Caco-2 (cell line): ENCODE measurements at regions of chr5 and their contacts with region 1.

Region 1: DNA sequence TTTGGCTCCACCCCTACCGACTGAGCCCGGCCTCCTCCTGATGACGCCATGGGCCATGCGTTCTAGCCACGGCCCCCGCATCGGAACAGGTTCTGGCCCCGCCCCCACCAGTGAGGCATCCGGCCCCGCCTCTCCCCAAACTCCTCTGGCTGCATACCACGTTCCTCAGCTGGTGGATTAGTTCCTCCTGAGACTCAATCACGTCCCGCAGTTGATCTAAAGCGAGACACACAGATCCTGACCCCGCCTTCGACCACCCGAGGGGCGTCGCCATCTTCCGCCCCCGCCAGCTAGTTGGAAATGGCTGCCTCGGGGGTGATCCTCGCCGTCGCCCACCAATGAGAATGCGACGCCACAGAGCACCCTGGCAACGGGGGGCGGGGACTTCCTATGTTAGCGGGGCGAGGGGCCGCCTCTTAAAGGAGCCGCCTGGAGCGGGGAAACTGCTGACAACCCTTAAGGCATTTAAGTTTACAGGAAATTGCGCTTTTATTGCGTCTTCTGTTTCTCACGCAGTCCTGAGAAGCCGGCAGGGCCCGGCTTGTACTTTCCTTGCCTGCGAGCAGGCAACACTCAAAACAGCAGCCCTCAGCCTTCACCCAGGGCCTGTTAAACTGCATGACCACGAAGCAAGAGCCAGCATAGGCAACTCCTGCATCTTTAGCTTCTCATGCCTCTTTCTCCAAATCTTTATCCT is at the start of gene SPATA24:
- DNase-seq: peak; percentile 97
- H3K4me3 ChIP-seq: peak within 1 kb of the TSS; percentile 57
- H3K4me3 Mint-ChIP-seq: peak within 1 kb of the TSS; percentile 90
- H3K27ac Mint-ChIP-seq: peak within 1 kb of the TSS; percentile 97
- H3K4me1 ChIP-seq: 0 out of 2 replicates have a peak, but pooled peaks cover 4% of the 10 kb centered on the region
- H3K4me1 Mint-ChIP-seq: peaks cover 13% of the 10 kb centered on the region
- H3K27me3 ChIP-seq: no peaks in the 10 kb centered on the region
- H3K27me3 Mint-ChIP-seq: no peaks in the 10 kb centered on the region
- CTCF ChIP-seq: no peak
- total RNA-seq, gene SPATA24: 10.1 and 10.2 TPM in 2 replicates

Region 2: GRCh38 chr5:139091439-139092156 is 312.3 kb before region 1 on chr5:
- CTCF ChIA-PET with region 1: no interaction called
- POLR2A ChIA-PET with region 1: no interaction called
- intact Hi-C with region 1: no loop called
- DNase-seq: peak in 1 of 2 experiments; percentile 46
- H3K4me3 ChIP-seq: no peak overlapping the region
- H3K4me3 Mint-ChIP-seq: no peak overlapping the region
- H3K27ac Mint-ChIP-seq: no peak overlapping the region
- H3K4me1 ChIP-seq: no peaks in the 10 kb centered on the region
- H3K4me1 Mint-ChIP-seq: no peaks in the 10 kb centered on the region
- H3K27me3 ChIP-seq: no peaks in the 10 kb centered on the region
- H3K27me3 Mint-ChIP-seq: no peaks in the 10 kb centered on the region
- CTCF ChIP-seq: peak in 1 of 2 experiments; percentile 48

Region 3: DNA sequence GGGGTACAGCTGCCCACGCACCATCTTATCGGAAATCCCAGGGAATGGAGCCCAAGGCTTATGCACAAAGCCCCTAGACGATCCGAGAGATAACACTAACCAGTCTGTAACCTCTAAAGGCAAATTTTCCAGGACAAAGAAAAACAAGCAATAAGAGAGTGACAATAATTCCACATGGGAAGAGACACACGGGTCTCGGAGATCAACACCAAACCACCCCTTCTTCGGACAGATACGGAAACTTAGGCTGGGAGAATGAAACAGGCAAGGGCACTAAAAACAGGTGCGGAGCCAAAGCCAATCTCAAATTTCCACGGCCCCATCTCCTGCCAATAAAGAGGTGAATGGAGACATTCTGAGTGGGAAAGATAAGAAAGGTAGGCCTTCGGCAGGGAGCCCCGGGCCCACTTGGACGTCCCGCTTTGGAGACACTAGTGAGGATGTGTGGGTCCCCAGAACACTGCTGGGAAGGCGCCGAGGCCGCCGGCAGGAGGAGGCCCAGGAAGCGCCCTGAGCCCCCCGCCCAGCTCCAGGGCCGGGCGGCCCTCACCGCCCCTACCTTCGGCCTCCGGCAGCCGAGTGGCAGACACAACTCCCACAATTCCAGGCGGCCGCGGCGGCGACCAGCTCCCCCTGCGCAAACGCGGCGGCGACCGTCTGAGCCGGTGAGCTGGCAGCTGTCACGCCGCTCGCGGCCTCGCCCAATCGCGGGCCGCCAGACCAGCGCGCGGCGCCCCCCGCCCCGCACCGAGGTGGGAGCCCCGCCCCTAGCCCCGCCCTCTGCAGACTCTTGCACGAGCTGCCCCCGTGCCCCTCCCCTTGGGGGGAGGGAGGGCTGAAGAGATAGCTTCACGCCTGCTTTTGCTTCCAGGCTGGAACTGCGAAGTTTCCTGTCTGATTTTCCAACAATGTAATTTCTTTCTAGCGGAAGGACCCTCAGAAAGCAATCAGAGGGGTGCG is 205.9 kb before region 1 on chr5 and contains the start of gene SIL1:
- CTCF ChIA-PET with region 1: no interaction called
- POLR2A ChIA-PET with region 1: no interaction called
- intact Hi-C with region 1: loop called (anchors 1 kb)
- DNase-seq: peak; percentile 97 to 98
- H3K4me3 ChIP-seq: peak within 1 kb of the TSS; percentile 53
- H3K4me3 Mint-ChIP-seq: peak within 1 kb of the TSS; percentile 96
- H3K27ac Mint-ChIP-seq: peak within 1 kb of the TSS; percentile 98
- H3K4me1 ChIP-seq: no peaks in the 10 kb centered on the region
- H3K4me1 Mint-ChIP-seq: no peaks in the 10 kb centered on the region
- H3K27me3 ChIP-seq: no peaks in the 10 kb centered on the region
- H3K27me3 Mint-ChIP-seq: no peaks in the 10 kb centered on the region
- CTCF ChIP-seq: no peak
- total RNA-seq, gene SIL1: 29.7 and 31.5 TPM in 2 replicates

Region 4: GRCh38 chr5:139293504-139294373 is 110.2 kb before region 1 on chr5 and contains the start of gene MATR3:
- CTCF ChIA-PET with region 1: no interaction called
- POLR2A ChIA-PET with region 1: interaction called, 10 read pairs
- intact Hi-C with region 1: no loop called
- DNase-seq: peak; percentile 96
- H3K4me3 ChIP-seq: peak within 1 kb of the TSS; percentile 76
- H3K4me3 Mint-ChIP-seq: peak within 1 kb of the TSS; percentile 96
- H3K27ac Mint-ChIP-seq: peak within 1 kb of the TSS; percentile 99
- H3K4me1 ChIP-seq: peaks cover 12% of the 10 kb centered on the region; the same call in 1 of the 2 replicates
- H3K4me1 Mint-ChIP-seq: peaks cover 21% of the 10 kb centered on the region
- H3K27me3 ChIP-seq: no peaks in the 10 kb centered on the region
- H3K27me3 Mint-ChIP-seq: no peaks in the 10 kb centered on the region
- CTCF ChIP-seq: no peak
- total RNA-seq, gene MATR3: 194 and 200 TPM in 2 replicates

Region 5: GRCh38 chr5:139392678-139393496 is 11.0 kb before region 1 on chr5:
- CTCF ChIA-PET with region 1: interaction called, 5 read pairs
- POLR2A ChIA-PET with region 1: interaction called, 4 read pairs
- intact Hi-C with region 1: loop called (anchors 1 kb)
- DNase-seq: peak; percentile 85 to 89
- H3K4me3 ChIP-seq: peak overlapping the region; percentile 86
- H3K4me3 Mint-ChIP-seq: peak overlapping the region; percentile 82
- H3K27ac Mint-ChIP-seq: peak overlapping the region; percentile 79
- H3K4me1 ChIP-seq: peaks cover 22% of the 10 kb centered on the region
- H3K4me1 Mint-ChIP-seq: peaks cover 9% of the 10 kb centered on the region
- H3K27me3 ChIP-seq: no peaks in the 10 kb centered on the region
- H3K27me3 Mint-ChIP-seq: no peaks in the 10 kb centered on the region
- CTCF ChIP-seq: peak; percentile 85 to 94

Region 6: DNA sequence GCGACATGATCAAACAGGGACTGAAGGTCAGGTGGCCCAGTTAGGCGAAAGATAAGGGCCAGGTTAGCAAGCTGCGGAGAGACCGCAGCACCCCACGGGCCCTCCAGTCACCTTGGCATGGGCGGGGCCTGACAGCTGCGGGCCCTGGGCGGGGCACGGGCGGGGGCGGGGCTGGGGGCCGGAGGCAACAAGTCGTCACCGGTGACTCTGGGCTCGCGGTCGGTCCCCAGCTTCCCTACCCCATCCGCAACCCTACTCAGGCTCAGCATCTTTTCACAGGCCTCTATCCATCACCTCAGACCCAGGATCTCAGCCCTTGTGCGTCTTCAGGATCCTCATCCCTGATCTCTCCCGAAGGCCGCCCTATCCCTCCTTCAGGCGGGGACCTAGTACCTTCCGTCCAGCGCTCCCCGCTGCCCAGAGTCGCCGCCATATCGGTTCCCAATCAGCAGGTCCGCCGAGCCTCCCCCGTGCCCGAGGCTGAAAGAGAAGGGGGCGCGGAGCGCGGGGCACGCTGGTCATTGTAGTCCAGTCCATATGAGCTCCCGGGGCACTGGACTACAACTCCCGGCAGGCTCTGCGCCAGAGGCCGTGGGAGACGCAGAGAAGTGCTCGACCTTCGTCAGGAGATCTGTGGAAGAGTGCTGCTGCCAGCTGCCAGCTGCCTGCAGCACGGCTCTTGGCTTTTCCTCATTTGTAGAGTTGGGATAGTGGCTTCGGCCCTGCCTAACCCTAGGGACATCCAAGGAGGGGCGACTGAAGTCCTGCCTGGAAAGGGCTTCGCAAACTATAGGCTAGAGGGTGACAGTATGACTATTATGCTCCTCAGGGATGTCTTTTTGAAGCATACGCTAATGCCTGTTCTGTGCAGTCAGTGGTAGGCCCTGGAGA is 35.3 kb after region 1 on chr5 and contains the start of gene DNAJC18:
- CTCF ChIA-PET with region 1: no interaction called
- POLR2A ChIA-PET with region 1: interaction called, 3 read pairs
- intact Hi-C with region 1: loop called (anchors 1 kb)
- DNase-seq: peak; percentile 94
- H3K4me3 ChIP-seq: peak within 1 kb of the TSS; percentile 94
- H3K4me3 Mint-ChIP-seq: peak within 1 kb of the TSS; percentile 99
- H3K27ac Mint-ChIP-seq: peak within 1 kb of the TSS; percentile 96
- H3K4me1 ChIP-seq: peaks cover 22% of the 10 kb centered on the region
- H3K4me1 Mint-ChIP-seq: peaks cover 21% of the 10 kb centered on the region
- H3K27me3 ChIP-seq: no peaks in the 10 kb centered on the region
- H3K27me3 Mint-ChIP-seq: no peaks in the 10 kb centered on the region
- CTCF ChIP-seq: no peak
- total RNA-seq, gene DNAJC18: 12.5 and 14.1 TPM in 2 replicates